Heart left ventricle (tissue), 16 donors: ENCODE measurements at regions of chr15 and their contacts with region 1.

Region 1: GRCh38 chr15:89171136-89172072 is 50.0 kb downstream of the RLBP1 start:
- DNase-seq: peak in 3 of 5 donors; percentile 41 to 43 (median 42)
- ATAC-seq: no peak
- H3K4me3 ChIP-seq: no peak overlapping the region
- H3K27ac ChIP-seq: no peak overlapping the region
- H3K4me1 ChIP-seq: peaks cover 3 to 54% (median 29%) of the 10 kb centered on the region in 12 donors
- H3K27me3 ChIP-seq: no peaks in the 10 kb centered on the region
- CTCF ChIP-seq: peak; percentile 39 to 72 (median 62)
- POLR2A ChIP-seq: no peak

Region 2: DNA sequence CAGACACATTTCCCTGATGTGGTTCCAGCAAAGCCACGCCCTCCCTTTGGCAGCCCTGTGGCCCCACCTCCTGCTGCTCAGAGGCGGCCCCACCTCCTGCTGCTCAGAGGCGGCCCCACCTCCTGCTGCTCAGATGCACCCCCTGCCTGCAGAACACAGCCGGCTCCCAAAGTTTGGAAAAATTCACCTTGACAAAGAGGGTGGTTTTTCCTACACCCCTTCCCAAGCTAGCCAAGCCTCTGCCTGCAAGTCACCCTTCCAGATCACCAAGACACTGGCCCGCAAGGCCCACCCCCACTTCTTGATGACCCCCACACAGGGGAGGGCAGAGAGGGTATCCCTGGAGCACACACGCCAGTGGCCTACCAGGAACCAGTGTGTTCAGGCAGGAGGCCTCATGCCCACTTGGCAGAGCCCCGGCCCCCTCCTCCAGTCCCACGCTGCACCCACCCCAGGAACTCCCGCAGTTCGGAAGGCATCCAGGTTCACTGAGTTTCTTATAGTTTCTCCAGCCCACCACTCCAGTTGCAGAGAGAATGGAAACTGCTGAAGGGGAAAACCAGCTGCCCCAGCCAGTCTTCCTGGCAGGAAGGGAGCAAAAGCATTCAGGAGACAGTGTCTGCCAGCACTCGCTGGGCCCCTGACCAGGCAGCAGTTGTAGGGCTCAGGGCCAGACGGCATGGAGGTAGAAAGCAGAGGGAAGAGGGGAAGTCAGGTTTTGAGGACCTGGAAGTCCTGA is 273.8 kb before region 1 on chr15:
- intact Hi-C with region 1: loop called in 6 of 10 experiments (anchors 5 to 10 kb)
- DNase-seq: peak; percentile 84 to 92 (median 90)
- ATAC-seq: peak; percentile 77 to 95 (median 88)
- H3K4me3 ChIP-seq: peak overlapping the region in 4 of 12 donors; percentile 5 to 28 (median 11)
- H3K27ac ChIP-seq: peak overlapping the region in 11 of 12 donors; percentile 68 to 87 (median 81)
- H3K4me1 ChIP-seq: peaks cover 5 to 72% (median 45%) of the 10 kb centered on the region in 12 donors
- H3K27me3 ChIP-seq: peaks cover 0 to 8% (median 0%) of the 10 kb centered on the region in 9 donors
- CTCF ChIP-seq: peak; percentile 47 to 88 (median 74)
- POLR2A ChIP-seq: no peak

Region 3: DNA sequence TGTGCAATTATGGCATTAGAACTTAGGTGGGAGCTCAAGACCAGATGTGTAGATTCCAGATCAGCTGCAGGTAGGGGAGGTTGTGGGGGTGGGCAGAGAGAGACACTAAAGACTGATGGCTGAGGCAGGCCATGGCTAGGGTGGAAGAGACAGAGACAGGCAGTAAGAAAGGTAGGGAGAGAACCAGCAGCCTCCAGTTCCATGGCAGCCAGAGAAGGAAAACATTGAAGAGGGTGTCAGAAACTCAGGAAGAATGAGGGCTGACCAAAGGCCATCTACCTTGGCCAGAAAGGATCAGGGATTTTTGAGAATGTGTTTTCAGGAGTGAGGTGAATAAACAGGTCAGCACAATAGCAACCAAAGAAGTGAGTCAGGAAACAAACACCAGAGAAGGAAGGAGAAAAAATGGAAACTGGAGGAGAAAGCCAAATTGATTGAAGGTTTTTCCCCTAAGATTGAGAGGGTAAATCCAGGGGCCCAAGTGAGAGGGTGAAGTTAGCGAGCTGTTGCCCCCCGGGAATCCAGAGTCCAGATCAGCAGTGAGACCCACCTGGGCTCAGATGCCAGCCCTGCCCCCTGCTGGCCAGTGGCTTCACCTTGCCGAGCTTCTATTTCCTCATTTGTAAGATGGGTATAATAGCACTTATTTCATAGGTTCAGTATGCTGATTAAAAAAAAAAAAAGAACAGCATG is 42.1 kb before region 1 on chr15:
- intact Hi-C with region 1: loop called in 2 of 10 experiments (anchors 2 to 5 kb)
- DNase-seq: peak in 1 of 5 donors; percentile 66
- ATAC-seq: no peak
- H3K4me3 ChIP-seq: no peak overlapping the region
- H3K27ac ChIP-seq: peak overlapping the region in 8 of 12 donors; percentile 6 to 88 (median 44)
- H3K4me1 ChIP-seq: peaks cover 0 to 83% (median 55%) of the 10 kb centered on the region in 12 donors
- H3K27me3 ChIP-seq: no peaks in the 10 kb centered on the region
- CTCF ChIP-seq: peak; percentile 25 to 70 (median 59)
- POLR2A ChIP-seq: no peak

Region 4: DNA sequence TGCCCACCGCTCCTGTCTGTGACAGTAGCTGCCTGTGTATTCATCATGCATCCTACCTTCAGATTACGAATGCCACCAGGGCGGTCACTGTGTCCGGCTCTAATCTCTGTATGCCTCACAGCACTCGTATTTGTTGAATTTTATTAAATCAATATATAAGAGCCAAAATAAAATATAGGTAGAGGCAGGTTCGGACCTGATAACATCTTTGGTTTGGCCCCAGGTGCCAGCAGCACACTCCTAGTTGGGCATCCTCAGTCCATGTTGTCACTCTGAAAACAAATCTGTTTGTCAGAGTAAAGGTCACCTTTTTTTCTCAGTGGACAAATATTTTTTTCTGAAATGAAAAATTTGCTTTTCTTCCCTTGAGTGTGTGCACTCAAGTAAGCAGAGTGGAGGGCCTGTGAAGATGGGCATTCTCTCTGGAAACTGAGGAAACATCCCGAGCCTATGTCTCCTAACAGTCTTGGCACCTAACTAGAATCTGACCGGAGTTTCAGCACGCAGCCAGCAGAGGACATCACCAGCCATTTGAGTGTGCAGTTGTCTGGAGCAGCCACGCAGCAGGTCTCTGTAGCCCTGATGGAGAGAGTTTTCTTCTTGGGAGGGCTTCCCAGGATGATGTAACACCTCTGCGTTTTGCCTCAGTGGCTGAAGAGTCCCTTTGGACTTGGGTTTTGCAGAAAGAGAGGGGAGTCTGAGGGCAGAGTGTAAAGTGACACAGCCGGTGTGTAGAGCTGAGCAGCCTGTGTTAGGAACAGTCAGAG is 31.8 kb before region 1 on chr15:
- intact Hi-C with region 1: loop called in 4 of 10 experiments (anchors 5 kb)
- DNase-seq: peak in 4 of 5 donors; percentile 41 to 65 (median 54)
- ATAC-seq: peak in 3 of 4 donors; percentile 10 to 14 (median 11)
- H3K4me3 ChIP-seq: no peak overlapping the region
- H3K27ac ChIP-seq: peak overlapping the region; percentile 31 to 90 (median 78)
- H3K4me1 ChIP-seq: peaks cover 22 to 100% (median 87%) of the 10 kb centered on the region in 12 donors
- H3K27me3 ChIP-seq: no peaks in the 10 kb centered on the region
- CTCF ChIP-seq: peak in 6 of 12 donors; percentile 11 to 42 (median 28)
- POLR2A ChIP-seq: no peak

Region 5: GRCh38 chr15:89334510-89335288 is 163.3 kb after region 1 on chr15 and contains the start of gene POLG:
- intact Hi-C with region 1: no loop called
- DNase-seq: peak; percentile 99
- ATAC-seq: peak; percentile 96 to 99 (median 98)
- H3K4me3 ChIP-seq: peak within 1 kb of the TSS; percentile 60 to 97 (median 82)
- H3K27ac ChIP-seq: peak within 1 kb of the TSS; percentile 21 to 98 (median 94)
- H3K4me1 ChIP-seq: peaks cover 6 to 54% (median 44%) of the 10 kb centered on the region in 12 donors
- H3K27me3 ChIP-seq: no peaks in the 10 kb centered on the region
- CTCF ChIP-seq: peak in 1 of 12 donors; percentile 13
- POLR2A ChIP-seq: peak; percentile 73 to 96
- total RNA-seq, gene POLG: 32.1 to 79.8 (median 38.4) TPM